Heart left ventricle (tissue), 16 donors: ENCODE measurements at regions of chr3 and their contacts with region 1.

Region 1: DNA sequence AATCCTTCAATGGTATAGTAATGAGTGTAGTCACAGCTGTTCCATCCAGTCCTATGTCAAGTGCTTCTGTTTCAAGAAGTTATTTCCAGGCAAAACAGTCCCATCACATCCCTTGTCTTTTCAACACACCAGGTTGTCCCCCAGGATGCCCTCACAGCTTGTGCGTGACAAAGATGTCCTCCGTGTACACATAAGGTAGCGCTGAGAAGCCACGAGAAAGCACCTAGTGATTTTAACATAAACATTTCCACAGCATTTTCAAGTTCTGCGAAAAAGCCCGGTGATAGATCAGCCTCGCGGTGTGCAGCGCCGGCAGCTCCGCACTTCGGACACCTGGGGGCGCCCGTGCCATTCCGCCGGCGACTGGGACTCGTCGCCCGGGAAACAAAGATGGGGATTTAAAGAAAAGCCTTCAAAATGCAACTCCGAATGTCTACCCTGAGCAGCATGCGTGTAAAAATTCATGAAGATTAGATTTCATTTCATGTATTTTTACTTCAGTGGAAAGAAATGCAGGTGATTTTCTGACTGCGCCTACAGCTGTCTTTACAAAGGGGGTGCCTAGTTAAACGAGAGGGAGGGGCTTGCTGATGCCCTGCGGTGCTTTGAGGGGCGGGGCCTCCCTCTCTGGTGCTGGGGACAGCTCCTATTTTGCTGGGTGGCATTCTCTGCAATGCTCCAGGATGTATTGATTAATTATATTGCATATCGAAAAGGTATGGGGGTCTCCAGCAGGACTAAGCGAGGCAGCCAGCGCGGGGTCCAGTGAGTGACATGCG is 49.9 kb downstream of the KY start:
- DNase-seq: peak; percentile 41 to 79 (median 54)
- ATAC-seq: peak in 3 of 4 donors; percentile 59 to 74 (median 69)
- H3K4me3 ChIP-seq: no peak overlapping the region
- H3K27ac ChIP-seq: no peak overlapping the region
- H3K4me1 ChIP-seq: peaks cover 0 to 16% (median 1%) of the 10 kb centered on the region in 12 donors
- H3K27me3 ChIP-seq: no peaks in the 10 kb centered on the region
- CTCF ChIP-seq: peak; percentile 89 to 98 (median 94)
- POLR2A ChIP-seq: no peak

Region 2: GRCh38 chr3:134754768-134755559 is 154.1 kb after region 1 on chr3:
- intact Hi-C with region 1: loop called in 3 of 10 experiments (anchors 5 to 10 kb)
- DNase-seq: peak in 3 of 5 donors; percentile 45 to 67 (median 57)
- ATAC-seq: peak in 2 of 4 donors; percentile 37 to 61
- H3K4me3 ChIP-seq: no peak overlapping the region
- H3K27ac ChIP-seq: no peak overlapping the region
- H3K4me1 ChIP-seq: peaks cover 0 to 18% (median 5%) of the 10 kb centered on the region in 12 donors
- H3K27me3 ChIP-seq: peaks cover 0 to 3% (median 0%) of the 10 kb centered on the region in 9 donors
- CTCF ChIP-seq: peak; percentile 26 to 58 (median 45)
- POLR2A ChIP-seq: no peak

Region 3: GRCh38 chr3:135240426-135240825 is 639.6 kb after region 1 on chr3:
- intact Hi-C with region 1: loop called in 1 of 10 experiments (anchors 10 kb)
- DNase-seq: no peak
- ATAC-seq: no peak
- H3K4me3 ChIP-seq: no peak overlapping the region
- H3K27ac ChIP-seq: no peak overlapping the region
- H3K4me1 ChIP-seq: no peaks in the 10 kb centered on the region
- H3K27me3 ChIP-seq: peaks cover 0 to 3% (median 0%) of the 10 kb centered on the region in 9 donors
- CTCF ChIP-seq: peak in 2 of 12 donors; percentile 12 to 21
- POLR2A ChIP-seq: no peak

Region 4: GRCh38 chr3:135503760-135504686 is 903.1 kb after region 1 on chr3:
- intact Hi-C with region 1: loop called in 8 of 10 experiments (anchors 2 to 10 kb)
- DNase-seq: peak; percentile 35 to 71 (median 51)
- ATAC-seq: peak in 3 of 4 donors; percentile 72 to 80 (median 75)
- H3K4me3 ChIP-seq: no peak overlapping the region
- H3K27ac ChIP-seq: no peak overlapping the region
- H3K4me1 ChIP-seq: peaks cover 0 to 5% (median 0%) of the 10 kb centered on the region in 12 donors
- H3K27me3 ChIP-seq: peaks cover 0 to 40% (median 5%) of the 10 kb centered on the region in 9 donors
- CTCF ChIP-seq: peak; percentile 41 to 68 (median 58)
- POLR2A ChIP-seq: no peak

Region 5: DNA sequence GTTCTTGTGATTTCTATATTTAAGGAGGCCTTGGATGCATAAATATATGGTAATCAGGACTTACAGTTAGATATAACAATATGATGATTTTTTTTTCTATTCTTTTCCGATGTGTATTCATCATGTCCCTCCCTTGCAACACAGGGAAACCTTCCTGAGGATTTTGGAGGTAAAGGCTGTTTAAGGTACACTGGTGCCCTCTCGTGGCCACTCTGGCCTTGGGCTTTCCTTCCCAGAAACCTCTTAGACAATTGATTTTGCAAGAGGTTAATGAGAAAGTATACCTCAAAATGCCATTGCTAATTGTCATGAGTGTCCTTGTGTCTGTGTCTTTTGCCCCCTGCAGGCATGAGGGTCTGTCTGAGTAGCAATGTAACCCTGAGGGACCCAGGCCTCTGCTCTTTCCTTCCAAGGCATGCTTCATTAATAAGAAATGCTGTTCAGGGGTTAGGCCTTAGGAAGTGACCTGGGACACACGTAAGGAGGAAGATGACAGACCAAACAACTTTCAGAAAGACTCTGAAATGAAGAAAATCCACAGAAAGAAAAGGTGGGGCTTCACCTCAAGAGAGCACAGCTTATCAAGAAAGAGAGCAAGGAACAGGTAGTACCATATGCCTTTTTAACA is 1294.3 kb after region 1 on chr3:
- intact Hi-C with region 1: loop called in 9 of 10 experiments (anchors 2 to 5 kb)
- DNase-seq: peak; percentile 39 to 67 (median 63)
- ATAC-seq: peak; percentile 42 to 67 (median 64)
- H3K4me3 ChIP-seq: no peak overlapping the region
- H3K27ac ChIP-seq: no peak overlapping the region
- H3K4me1 ChIP-seq: no peaks in the 10 kb centered on the region
- H3K27me3 ChIP-seq: peaks cover 0 to 4% (median 0%) of the 10 kb centered on the region in 9 donors
- CTCF ChIP-seq: peak; percentile 67 to 88 (median 82)
- POLR2A ChIP-seq: no peak